Activated T-helper 1 cell treated with anti-CD3 and anti-CD28 coated beads, Interleukin-12 subunit alpha, Interleukin-12 subunit beta, Interleukin-2, Interleukin-4 antibody, amounts not matched to agents 30 ng/mL and 10 ng/mL and 1 ng/mL, durations not matched to agents 14 hours and 24 hours and 36 hours (primary cell): ENCODE measurements at regions of chr5 and their contacts with region 1.

Region 1: DNA sequence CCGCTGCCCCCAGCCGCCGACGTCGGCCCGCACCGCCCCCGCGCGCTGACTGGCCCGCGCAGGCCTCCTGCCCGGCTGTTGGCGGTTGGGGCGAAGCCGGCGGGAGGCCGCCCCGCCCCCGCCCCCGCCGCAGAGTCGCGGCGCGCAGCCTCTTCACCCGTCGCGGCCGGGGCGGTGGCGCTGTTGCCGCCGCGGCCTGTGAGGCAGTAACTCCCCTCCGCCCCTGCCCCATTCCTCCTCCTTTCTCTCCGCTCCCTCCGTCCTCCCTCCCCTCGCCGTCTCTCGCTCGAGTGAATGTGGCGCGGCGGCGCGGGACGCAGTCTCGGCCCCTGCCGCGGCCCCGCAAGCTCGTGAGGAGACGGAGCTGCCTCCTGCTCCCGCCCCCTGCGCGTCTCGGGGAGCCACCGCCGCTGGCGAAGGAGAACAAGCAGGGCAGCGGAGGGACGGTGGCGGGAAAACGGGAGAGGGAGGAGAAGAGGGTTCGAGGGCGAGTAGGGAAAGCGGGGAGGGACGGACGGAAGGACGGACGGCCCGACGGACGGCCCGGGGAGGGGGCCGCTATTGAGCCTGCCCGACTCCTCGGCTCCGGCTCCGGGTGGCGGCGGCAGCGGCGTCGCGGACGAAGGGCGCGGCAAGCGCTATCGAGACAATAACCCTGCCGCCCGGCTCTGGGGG is 637 bp upstream of the ERBIN start:
- DNase-seq: peak; percentile 74
- H3K4me3 Mint-ChIP-seq: peak overlapping the region; percentile 88
- H3K27ac Mint-ChIP-seq: peak overlapping the region; percentile 92
- H3K4me1 Mint-ChIP-seq: peaks cover 42% of the 10 kb centered on the region
- H3K27me3 Mint-ChIP-seq: peaks cover 22% of the 10 kb centered on the region

Region 2: GRCh38 chr5:65624571-65625555 is 300.9 kb before region 1 on chr5 and contains the starts of genes SHLD3 and TRAPPC13:
- intact Hi-C with region 1: loop called (anchors 1 kb)
- DNase-seq: peak; percentile 81
- H3K4me3 Mint-ChIP-seq: peak within 1 kb of the TSS; percentile 94
- H3K27ac Mint-ChIP-seq: peak within 1 kb of the TSS; percentile 96
- H3K4me1 Mint-ChIP-seq: peaks cover 33% of the 10 kb centered on the region
- H3K27me3 Mint-ChIP-seq: no peaks in the 10 kb centered on the region
- total RNA-seq, gene SHLD3: 6.5 and 7.6 TPM in 2 replicates
- total RNA-seq, gene TRAPPC13: 21.7 and 23.7 TPM in 2 replicates

Region 3: DNA sequence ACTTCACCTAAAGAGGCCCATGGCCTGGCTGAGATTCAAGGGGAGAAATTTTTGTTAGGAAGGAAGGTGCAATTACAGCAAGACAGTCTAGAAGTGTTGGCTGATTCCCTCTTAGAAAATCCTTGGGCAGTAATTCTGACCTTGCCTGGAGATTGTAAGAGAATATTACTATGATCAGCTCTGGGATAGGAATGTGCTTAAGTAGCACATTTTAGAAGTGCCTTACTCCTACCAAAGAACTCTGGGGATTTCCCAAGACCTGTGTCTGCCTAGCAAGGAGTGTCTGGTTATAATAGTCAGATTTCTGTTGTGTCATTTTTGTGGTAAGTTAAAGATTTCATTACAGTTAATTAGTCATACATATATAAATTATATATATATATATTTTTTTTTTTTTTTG is 151.4 kb before region 1 on chr5:
- intact Hi-C with region 1: loop called (anchors 2 kb)
- DNase-seq: peak; percentile 10
- H3K4me3 Mint-ChIP-seq: no peak overlapping the region
- H3K27ac Mint-ChIP-seq: peak overlapping the region; percentile 3
- H3K4me1 Mint-ChIP-seq: peaks cover 46% of the 10 kb centered on the region
- H3K27me3 Mint-ChIP-seq: no peaks in the 10 kb centered on the region

Region 4: GRCh38 chr5:65961633-65962032 is 35.9 kb after region 1 on chr5:
- intact Hi-C with region 1: loop called (anchors 2 kb)
- DNase-seq: no peak
- H3K4me3 Mint-ChIP-seq: no peak overlapping the region
- H3K27ac Mint-ChIP-seq: no peak overlapping the region
- H3K4me1 Mint-ChIP-seq: peaks cover 31% of the 10 kb centered on the region
- H3K27me3 Mint-ChIP-seq: no peaks in the 10 kb centered on the region

Region 5: GRCh38 chr5:66171349-66172344 is 245.9 kb after region 1 on chr5:
- intact Hi-C with region 1: loop called (anchors 5 kb)
- DNase-seq: peak; percentile 30
- H3K4me3 Mint-ChIP-seq: no peak overlapping the region
- H3K27ac Mint-ChIP-seq: peak overlapping the region; percentile 40
- H3K4me1 Mint-ChIP-seq: peaks cover 29% of the 10 kb centered on the region
- H3K27me3 Mint-ChIP-seq: no peaks in the 10 kb centered on the region

Region 6: GRCh38 chr5:66958980-66959641 is 1033.4 kb after region 1 on chr5:
- intact Hi-C with region 1: no loop called
- DNase-seq: no peak
- H3K4me3 Mint-ChIP-seq: no peak overlapping the region
- H3K27ac Mint-ChIP-seq: no peak overlapping the region
- H3K4me1 Mint-ChIP-seq: peaks cover 7% of the 10 kb centered on the region
- H3K27me3 Mint-ChIP-seq: no peaks in the 10 kb centered on the region

Region 7: DNA sequence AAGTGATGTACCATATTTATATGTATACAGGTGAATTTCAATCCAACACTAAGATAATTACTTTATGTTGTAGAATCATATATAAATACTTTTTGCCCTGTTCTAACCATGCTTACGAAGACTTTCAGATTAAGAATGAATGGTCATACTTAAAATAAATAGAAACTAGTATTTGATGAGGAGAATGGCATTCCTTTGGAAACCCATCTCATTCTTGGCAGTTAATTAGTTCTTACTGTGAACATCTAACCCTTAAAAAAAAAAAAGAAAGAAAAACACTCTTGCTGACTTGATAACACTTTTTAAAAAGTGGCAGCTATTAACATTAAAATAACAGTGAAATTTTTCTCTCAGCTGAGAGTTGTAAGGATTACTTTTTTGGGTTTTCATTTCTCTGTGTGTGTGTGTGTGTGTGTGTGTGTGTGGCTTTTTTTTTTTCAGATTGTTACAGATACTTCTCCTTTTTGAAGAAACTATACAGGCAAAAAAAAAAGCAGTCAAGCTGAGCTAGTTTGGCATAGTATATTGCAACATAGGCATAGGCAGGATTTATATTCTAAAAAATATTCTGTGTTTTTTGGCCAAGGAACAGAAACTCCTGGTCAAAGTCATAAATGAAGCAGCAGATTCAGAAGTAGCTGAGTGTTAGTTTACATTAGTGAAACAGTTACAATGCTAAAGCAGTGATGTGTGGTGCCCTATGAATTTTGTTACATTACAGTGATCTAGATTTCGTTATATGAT is 1107.4 kb after region 1 on chr5:
- intact Hi-C with region 1: loop called (anchors 5 kb)
- DNase-seq: no peak
- H3K4me3 Mint-ChIP-seq: no peak overlapping the region
- H3K27ac Mint-ChIP-seq: peak overlapping the region; percentile 10
- H3K4me1 Mint-ChIP-seq: peaks cover 76% of the 10 kb centered on the region
- H3K27me3 Mint-ChIP-seq: no peaks in the 10 kb centered on the region